SK-N-SH (cell line): ENCODE measurements at regions of chr11 and their contacts with region 1.

Region 1: GRCh38 chr11:63032457-63032856 is 16.8 kb upstream of the SLC22A8 start:
- DNase-seq: no peak
- H3K4me3 ChIP-seq: no peak overlapping the region
- H3K27ac ChIP-seq: no peak overlapping the region
- H3K4me1 ChIP-seq: no peaks in the 10 kb centered on the region
- H3K27me3 ChIP-seq: peaks cover 19% of the 10 kb centered on the region
- CTCF ChIP-seq: no peak
- EP300 ChIP-seq: no peak
- RAD21 ChIP-seq: no peak

Region 2: DNA sequence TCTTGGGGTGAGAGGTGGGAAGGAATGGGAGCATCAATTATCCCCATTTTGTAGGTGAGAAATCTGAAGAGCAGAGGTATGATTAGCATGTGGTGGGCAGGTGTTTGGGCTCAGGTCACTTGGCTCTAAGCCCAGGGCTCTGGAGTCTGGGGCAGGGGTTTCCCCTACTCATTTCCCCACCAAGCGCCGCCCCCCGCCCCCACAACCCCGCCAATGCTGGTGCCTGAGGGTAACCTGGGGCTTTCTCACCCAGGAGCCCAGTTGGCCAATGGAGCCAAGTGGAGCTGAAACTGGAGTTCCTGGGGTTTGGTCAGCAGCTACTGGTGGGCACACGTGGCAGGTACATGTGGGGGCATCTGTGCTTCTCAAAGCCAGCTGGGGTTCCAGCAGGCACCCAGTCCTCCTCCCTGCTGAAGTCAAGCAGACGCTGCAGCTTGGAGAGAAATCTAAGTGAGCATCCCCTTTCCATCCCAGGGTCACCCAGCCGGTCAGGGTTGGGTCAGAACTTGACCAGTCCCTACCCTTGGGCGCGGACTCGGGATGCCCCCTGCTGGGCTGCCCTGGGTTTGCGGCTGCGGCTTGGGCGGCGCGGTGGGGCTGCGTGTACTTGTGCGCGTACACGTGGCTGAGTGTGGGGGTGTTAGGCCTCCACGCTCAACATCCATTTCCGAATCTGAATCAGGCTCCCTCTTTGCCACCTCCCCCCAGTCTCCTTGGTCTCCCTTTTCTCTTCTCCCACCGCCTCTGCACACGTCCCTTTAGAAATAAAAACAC is 109.6 kb before region 1 on chr11:
- CTCF ChIA-PET with region 1: interaction called, 10 read pairs
- POLR2A ChIA-PET with region 1: no interaction called
- DNase-seq: no peak
- H3K4me3 ChIP-seq: no peak overlapping the region
- H3K27ac ChIP-seq: no peak overlapping the region
- H3K4me1 ChIP-seq: peaks cover 0 to 36% of the 10 kb centered on the region in 2 experiments; a peak in 1 of 4 replicates
- H3K27me3 ChIP-seq: no peaks in the 10 kb centered on the region
- CTCF ChIP-seq: peak; percentile 23; the same call in 1 of the 2 replicates
- EP300 ChIP-seq: no peak
- RAD21 ChIP-seq: no peak

Region 3: DNA sequence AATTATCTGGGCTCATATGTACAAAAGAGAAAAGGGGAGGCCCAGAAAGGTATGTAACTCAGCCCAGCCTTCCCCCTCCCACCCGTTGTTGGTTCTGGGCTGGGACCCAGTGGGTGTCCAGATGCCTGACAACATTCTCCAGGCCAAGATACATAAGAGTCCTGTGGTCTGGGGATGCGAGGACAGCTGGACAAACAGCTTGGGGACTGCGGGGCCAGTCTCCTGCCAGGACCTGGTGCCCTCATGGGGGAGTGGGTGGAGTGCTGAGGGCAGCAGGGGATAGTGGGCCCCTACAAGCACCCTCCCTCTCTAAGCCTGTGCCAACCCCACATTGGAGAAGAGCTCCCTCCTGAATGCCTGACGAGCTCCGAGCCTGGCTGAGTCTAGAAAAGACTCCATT is 44.2 kb before region 1 on chr11:
- CTCF ChIA-PET with region 1: interaction called, 13 read pairs
- POLR2A ChIA-PET with region 1: no interaction called
- DNase-seq: no peak
- H3K4me3 ChIP-seq: no peak overlapping the region
- H3K27ac ChIP-seq: no peak overlapping the region
- H3K4me1 ChIP-seq: peaks cover 0 to 4% of the 10 kb centered on the region in 2 experiments; a peak in 1 of 4 replicates
- H3K27me3 ChIP-seq: no peaks in the 10 kb centered on the region; the same call in 1 of the 2 replicates
- CTCF ChIP-seq: no peak
- EP300 ChIP-seq: no peak
- RAD21 ChIP-seq: no peak

Region 4: GRCh38 chr11:62999649-63000048 is 32.8 kb before region 1 on chr11:
- CTCF ChIA-PET with region 1: interaction called, 10 read pairs
- POLR2A ChIA-PET with region 1: no interaction called
- DNase-seq: no peak
- H3K4me3 ChIP-seq: no peak overlapping the region
- H3K27ac ChIP-seq: no peak overlapping the region
- H3K4me1 ChIP-seq: no peaks in the 10 kb centered on the region
- H3K27me3 ChIP-seq: no peaks in the 10 kb centered on the region; the same call in 1 of the 2 replicates
- CTCF ChIP-seq: no peak
- EP300 ChIP-seq: no peak
- RAD21 ChIP-seq: no peak

Region 5: GRCh38 chr11:63007920-63008319 is 24.5 kb before region 1 on chr11:
- CTCF ChIA-PET with region 1: interaction called, 11 read pairs
- POLR2A ChIA-PET with region 1: no interaction called
- DNase-seq: no peak
- H3K4me3 ChIP-seq: no peak overlapping the region
- H3K27ac ChIP-seq: no peak overlapping the region
- H3K4me1 ChIP-seq: no peaks in the 10 kb centered on the region; a peak in 1 of 4 replicates
- H3K27me3 ChIP-seq: no peaks in the 10 kb centered on the region
- CTCF ChIP-seq: no peak
- EP300 ChIP-seq: no peak
- RAD21 ChIP-seq: no peak

Region 6: GRCh38 chr11:63212742-63213141 is 180.3 kb after region 1 on chr11:
- CTCF ChIA-PET with region 1: interaction called, 18 read pairs
- POLR2A ChIA-PET with region 1: no interaction called
- DNase-seq: peak; percentile 23
- H3K4me3 ChIP-seq: no peak overlapping the region
- H3K27ac ChIP-seq: no peak overlapping the region
- H3K4me1 ChIP-seq: no peaks in the 10 kb centered on the region
- H3K27me3 ChIP-seq: peaks cover 6% of the 10 kb centered on the region; the same call in 1 of the 2 replicates
- CTCF ChIP-seq: peak; percentile 76
- EP300 ChIP-seq: no peak
- RAD21 ChIP-seq: peak; percentile 71